A673 (cell line): ENCODE measurements at regions of chr2 and their contacts with region 1.

Region 1: GRCh38 chr2:240626531-240627300 is 1.4 kb downstream of the GPR35 start:
- DNase-seq: peak; percentile 36
- H3K4me3 ChIP-seq: no peak overlapping the region
- H3K27ac ChIP-seq: no peak overlapping the region
- H3K4me1 ChIP-seq: no peaks in the 10 kb centered on the region
- H3K27me3 ChIP-seq: no peaks in the 10 kb centered on the region
- CTCF ChIP-seq: no peak

Region 2: DNA sequence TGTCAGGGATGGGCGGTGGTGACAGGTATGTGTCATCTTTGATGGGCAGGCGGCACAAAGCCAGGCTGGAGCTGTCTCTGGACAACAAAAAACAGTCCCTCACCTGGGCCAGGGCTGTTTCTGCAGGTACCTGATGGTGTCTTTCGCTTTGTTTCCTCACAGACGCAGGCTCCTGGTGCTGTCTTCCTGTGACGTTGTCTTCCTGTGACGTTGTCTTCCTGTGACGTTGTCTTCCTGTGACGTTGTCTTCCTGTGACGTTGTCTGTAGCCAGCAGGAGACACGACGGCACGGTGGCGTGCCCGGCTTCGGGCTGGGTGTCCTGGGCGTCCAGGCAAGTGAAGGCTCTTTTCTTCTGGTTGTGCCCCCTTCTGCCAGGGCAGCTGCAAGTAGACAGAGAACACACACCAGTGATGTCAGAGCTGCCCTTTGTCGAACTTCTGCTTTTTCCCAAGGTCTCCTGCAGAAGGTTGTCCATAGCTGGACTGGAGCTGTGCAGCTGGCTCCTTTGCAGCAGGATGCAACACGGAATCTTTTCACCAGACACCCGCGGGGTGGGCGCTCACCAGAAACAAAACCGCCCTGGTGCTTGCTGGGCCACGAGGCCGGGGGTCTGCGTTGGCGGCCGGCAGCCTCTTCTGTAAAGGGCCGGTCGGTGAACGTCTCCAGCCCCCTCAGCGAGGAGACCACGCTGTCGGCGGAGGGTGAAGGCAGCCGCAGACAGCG is 19.6 kb after region 1 on chr2:
- CTCF ChIA-PET with region 1: interaction called, 12 read pairs
- POLR2A ChIA-PET with region 1: no interaction called
- intact Hi-C with region 1: no loop called
- DNase-seq: no peak
- H3K4me3 ChIP-seq: no peak overlapping the region
- H3K27ac ChIP-seq: no peak overlapping the region
- H3K4me1 ChIP-seq: no peaks in the 10 kb centered on the region
- H3K27me3 ChIP-seq: peaks cover 68% of the 10 kb centered on the region
- CTCF ChIP-seq: no peak